Posterior cingulate gyrus (tissue), 11 donors: ENCODE measurements at regions of chr3 and their contacts with region 1.

Region 1: GRCh38 chr3:153043729-153044328 is 118.2 kb upstream of the RAP2B start:
- DNase-seq: no peak

Region 2: DNA sequence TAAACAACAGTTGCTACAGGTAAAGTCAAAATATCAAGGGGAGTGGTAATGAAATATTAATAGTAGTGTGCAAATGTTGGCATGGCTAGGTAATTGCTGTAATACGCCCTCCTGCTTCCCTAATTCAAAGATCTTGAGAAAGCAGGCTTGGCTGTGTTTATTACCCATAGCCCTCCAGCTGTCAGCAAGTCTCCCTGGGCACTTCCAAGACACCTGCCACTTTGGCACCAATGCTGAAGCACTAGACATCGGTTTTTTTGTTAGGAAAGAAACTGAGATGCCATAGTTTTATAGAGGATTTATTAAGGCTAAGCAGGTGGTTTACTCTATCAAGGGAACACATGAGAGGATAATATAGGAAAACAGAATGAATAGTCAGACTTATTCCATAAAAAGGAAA is 144.5 kb before region 1 on chr3:
- intact Hi-C with region 1: no loop called
- DNase-seq: no peak

Region 3: GRCh38 chr3:153161138-153161713 is 117.4 kb after region 1 on chr3:
- intact Hi-C with region 1: loop called (anchors 2 kb)
- DNase-seq: peak; percentile 66 to 98 (median 88)

Region 4: GRCh38 chr3:153595186-153595815 is 551.5 kb after region 1 on chr3:
- intact Hi-C with region 1: loop called (anchors 10 kb)
- DNase-seq: no peak

Region 5: GRCh38 chr3:153768561-153769469 is 725.0 kb after region 1 on chr3:
- intact Hi-C with region 1: loop called (anchors 1 kb)
- DNase-seq: peak in 3 of 10 donors; percentile 19 to 78 (median 23)

Region 6: DNA sequence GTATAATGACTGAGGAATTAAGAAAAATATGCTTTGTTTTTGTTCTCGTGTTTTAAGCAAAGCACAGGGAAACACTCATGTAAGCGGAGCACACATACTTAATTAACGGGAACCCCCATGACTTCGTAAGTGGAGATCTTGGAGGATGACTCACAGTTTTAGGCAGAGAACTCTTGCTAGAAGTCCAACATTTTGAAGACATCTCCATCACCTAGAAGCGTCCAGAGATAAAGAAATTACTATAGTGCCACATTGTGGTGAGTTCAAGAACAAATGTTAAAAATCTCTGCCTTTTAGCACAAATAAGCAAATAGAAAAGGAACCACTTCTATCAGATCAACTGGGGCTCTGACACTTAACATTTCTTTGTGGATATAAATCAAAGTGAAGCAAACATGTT is 883.3 kb after region 1 on chr3:
- intact Hi-C with region 1: loop called (anchors 2 kb)
- DNase-seq: no peak

Region 7: GRCh38 chr3:153970741-153971347 is 927.0 kb after region 1 on chr3:
- intact Hi-C with region 1: loop called (anchors 5 kb)
- DNase-seq: no peak